ENCODE measurements at regions of chr1 and their contacts with region 1.

Region 1: DNA sequence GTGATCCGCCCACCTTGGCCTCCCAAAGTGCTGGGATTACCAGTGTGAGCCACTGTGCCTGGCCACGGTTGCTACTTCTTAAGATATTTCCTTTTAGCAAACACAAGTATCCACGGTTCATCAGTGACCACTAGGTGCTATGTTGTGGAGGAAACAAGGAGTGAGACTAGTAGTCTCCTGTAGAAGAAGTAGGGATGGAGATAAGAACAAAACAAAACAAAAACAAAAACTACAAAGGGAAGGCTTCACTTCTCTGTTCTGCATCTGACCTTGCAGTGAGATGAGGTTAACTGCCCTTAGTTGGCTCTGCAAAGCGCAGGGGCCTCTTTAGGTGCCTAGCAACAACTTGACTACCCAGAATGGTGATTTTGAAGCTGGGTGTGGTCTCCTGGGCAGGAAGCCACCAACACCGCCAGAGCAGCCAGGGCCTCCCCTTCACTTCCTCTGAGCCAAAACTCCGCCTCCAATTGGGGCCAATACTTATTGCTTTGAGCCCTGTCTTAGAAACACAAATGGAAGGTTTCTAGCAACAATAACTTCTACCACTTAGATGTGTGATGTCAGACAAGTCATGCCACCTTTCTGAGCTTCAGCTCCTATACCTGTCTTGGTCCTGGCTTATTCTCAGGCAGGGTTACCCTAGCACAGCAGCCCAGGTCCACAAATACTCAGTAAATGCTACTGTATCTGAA is 12.8 kb upstream of the CDC42 start:
- DNase-seq: no peak
- H3K4me3 ChIP-seq: no peak overlapping the region
- H3K27ac ChIP-seq: no peak overlapping the region
- H3K4me1 ChIP-seq: peaks cover 4 to 15% (median 8%) of the 10 kb centered on the region in 4 experiments; a peak in 6 of 7 replicates
- H3K27me3 ChIP-seq: no peaks in the 10 kb centered on the region
- CTCF ChIP-seq: no peak
- EP300 ChIP-seq: no peak
- POLR2A ChIP-seq: no peak
- RAD21 ChIP-seq: no peak

Region 2: DNA sequence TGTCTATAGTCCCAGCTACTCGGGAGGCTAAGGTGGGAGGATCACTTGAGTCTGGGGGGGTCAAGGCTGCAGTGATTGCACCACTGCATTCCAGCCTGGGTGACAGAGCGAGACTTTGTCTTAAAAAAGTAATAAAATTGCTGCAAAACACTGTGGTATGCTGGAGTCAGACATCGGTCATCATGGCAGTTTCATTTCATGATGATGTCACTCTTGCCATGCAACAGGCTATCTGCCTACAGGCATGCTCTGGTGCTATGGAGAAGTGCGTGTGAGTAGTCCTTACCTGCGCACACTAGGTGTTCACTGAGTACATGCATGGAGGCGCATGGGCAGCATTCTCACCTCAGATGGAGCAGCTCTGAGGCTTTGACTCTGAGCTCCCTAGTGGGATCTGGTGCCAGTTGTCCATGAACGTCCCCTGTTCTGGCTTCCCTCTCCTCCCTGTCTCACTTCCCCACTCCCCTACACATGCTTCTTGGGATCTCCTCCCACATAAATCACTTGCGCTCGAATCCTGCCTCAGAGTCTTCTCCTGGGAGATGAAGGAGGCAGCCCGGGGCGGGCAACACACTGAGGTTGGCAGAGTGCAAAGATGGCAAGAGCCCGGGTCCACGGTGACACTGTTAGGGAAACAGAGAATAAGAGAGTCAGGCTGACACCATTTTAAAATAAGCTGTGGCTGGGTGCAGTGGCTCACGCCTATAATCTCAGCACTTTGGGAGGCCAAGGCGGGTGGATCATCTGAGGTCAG is 73.3 kb before region 1 on chr1:
- CTCF ChIA-PET with region 1: no interaction called
- POLR2A ChIA-PET with region 1: no interaction called
- DNase-seq: no peak
- H3K4me3 ChIP-seq: no peak overlapping the region
- H3K27ac ChIP-seq: no peak overlapping the region
- H3K4me1 ChIP-seq: peaks cover 0 to 6% (median 4%) of the 10 kb centered on the region in 4 experiments; a peak in 6 of 7 replicates
- H3K27me3 ChIP-seq: no peaks in the 10 kb centered on the region
- CTCF ChIP-seq: no peak
- EP300 ChIP-seq: no peak
- POLR2A ChIP-seq: no peak
- RAD21 ChIP-seq: no peak

Region 3: DNA sequence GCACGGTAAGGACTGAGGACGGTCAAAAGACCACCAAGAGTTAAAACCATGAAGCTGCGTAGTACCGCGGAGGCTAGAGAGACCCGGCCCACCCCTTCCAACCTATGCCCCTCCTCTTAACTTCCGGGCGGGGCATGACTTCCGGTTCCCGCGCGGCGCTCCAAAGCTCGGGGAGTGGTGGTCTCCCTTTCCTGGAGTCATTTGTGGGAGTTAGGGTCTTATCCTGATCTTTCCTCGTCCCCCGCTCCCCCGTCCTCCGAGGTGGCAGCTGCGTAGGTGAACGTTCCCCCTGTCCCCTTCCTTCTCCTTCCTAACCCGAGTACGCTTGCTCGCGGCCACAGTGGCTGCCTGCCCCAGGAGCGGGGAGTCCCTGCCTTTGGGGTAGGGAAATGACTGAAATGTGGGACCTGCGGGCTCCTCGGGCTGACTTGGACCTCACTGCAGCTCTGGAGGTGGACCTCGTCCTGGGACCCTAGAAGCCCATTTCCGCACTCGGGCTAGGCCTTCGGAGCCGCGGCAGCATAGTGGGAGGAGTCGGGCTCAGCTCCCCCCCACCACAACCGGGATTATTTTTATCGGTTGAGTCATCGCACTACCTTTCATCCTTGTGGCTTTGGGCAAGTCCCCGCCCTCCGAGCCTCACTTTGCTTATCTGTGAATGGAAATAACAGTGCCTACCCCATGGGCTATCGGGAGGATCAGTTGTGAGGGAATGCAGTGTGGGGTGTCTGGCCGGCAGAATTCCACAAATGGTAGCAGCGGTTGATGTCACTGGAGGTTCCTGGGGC is 14.2 kb before region 1 on chr1:
- CTCF ChIA-PET with region 1: interaction called, 11 read pairs
- POLR2A ChIA-PET with region 1: interaction called, 26 read pairs
- DNase-seq: peak in 1 of 2 experiments; percentile 87
- H3K4me3 ChIP-seq: peak overlapping the region; percentile 93 to 96 (median 94)
- H3K27ac ChIP-seq: peak overlapping the region; percentile 90
- H3K4me1 ChIP-seq: peaks cover 0 to 12% (median 8%) of the 10 kb centered on the region in 4 experiments
- H3K27me3 ChIP-seq: no peaks in the 10 kb centered on the region
- CTCF ChIP-seq: no peak
- EP300 ChIP-seq: no peak
- POLR2A ChIP-seq: peak in 1 of 2 experiments; percentile 90; a peak in 2 of 3 replicates
- RAD21 ChIP-seq: no peak

Measured in H1 (cell line).